ENCODE measurements at regions of chrX and their contacts with region 1.

Region 1: DNA sequence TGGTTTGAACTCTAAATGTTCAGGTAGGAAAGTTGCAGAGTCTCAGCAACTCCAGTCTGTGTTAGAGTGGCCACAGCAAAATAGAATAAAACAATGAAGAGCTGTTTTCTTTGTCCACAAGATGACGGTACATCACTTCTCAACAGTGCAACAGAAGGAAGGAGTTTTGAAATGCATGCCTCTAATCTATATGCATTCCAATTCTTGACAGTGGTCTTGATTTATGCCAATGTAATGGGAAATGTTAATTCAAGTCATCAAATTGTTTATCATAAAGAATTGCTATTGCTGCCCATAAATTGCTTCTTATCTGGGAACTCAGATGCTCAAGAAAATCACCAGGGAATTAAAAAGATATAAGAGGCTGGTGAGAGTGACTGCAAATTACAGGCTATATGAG is 195.5 kb upstream of the PRPS2 start:
- H3K4me3 Mint-ChIP-seq: no peak overlapping the region
- H3K27ac Mint-ChIP-seq: no peak overlapping the region
- H3K4me1 Mint-ChIP-seq: no peaks in the 10 kb centered on the region
- H3K27me3 Mint-ChIP-seq: peaks cover 2% of the 10 kb centered on the region

Region 2: DNA sequence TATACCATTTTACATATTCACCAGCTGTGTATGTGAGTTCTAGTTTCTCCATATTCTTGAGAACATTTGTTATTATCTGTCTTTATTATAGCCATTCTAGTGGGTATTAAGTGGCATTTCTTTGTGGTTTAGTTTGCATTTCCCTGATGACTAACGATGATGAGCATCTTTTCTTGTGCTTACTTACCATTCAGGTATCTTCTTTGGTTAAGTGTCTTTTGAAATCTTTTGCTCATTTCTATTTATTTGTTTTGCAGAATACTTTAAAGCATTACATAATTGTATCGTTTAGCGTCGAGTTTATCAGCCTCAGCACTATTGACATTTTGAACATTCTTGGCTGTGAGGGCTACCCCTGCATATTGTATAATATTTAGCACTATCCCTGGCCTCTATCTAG is 372.1 kb before region 1 on chrX:
- intact Hi-C with region 1: no loop called
- H3K4me3 Mint-ChIP-seq: no peak overlapping the region
- H3K27ac Mint-ChIP-seq: no peak overlapping the region
- H3K4me1 Mint-ChIP-seq: no peaks in the 10 kb centered on the region
- H3K27me3 Mint-ChIP-seq: no peaks in the 10 kb centered on the region

Region 3: DNA sequence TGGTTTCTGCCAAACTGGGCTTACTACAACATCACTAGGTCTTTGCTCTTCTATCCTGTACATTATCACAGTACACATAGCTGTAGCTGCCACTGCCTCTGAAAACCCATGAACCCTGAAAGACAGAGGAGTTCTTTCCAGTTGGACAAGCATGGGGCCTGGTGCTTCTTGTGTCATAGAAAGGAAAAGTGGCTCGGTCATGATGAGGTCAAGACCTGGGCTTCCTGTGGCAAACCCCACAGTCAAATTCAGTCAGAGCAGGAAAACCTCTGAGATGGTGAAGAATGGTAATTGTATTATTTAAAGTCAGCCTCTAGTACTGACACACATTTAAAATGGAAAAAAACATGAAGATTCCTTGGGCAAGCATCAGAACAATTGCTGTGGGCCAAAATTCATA is 62.2 kb after region 1 on chrX:
- intact Hi-C with region 1: loop called (anchors 10 kb)
- H3K4me3 Mint-ChIP-seq: no peak overlapping the region
- H3K27ac Mint-ChIP-seq: no peak overlapping the region
- H3K4me1 Mint-ChIP-seq: no peaks in the 10 kb centered on the region
- H3K27me3 Mint-ChIP-seq: no peaks in the 10 kb centered on the region

Measured in dendritic cell treated with granulocyte-macrophage colony-stimulating factor and Interleukin-4, amounts not matched to agents 40 ng/mL and 50 ng/mL, for 4 days (primary cell).